ENCODE measurements at regions of chr2 and their contacts with region 1.

Region 1: DNA sequence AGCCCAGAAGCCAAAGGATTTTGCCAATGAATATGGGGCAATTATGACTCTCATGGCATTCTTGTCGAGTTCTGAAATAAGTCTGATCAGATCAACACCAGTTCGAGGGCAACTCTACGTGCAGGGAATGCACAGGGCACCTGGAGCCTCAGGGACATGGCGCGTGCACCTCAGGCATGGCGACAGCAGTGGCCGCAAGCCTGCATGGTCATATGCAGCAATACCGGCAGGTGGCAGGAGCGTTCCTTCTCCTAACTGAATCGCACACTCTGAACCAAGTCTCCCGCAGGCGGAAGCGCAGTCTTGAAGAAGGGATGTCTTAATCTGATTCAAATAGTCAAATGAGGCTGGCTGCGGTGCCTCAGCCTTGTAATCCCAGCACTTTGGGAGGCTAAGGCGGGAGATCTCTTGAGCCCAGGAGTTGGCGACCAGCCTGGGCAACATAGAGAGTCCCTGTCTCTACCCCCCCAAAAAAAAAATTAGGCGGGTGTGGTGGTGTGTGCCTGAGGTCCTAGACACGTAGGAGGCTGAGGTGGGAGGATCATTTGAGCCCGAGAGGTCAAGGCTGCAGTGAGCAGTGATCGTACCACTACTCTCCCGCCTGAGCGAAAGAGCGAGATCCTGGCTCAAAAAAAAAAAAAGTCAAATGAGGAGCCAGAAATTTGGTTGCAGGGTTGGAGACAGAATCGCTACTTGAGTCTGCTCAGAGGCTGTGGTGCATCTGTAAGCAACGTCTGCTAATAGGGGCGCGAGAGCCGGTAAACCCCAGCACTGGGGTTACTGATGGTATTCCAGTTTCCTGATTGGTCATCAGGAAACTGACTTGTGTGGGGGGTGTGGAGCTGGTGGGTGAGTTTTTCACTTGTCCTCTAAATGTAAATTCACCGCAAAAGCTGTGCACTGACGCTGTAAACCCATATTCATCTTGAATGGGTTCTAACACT is 28.8 kb downstream of the FHL2 start:
- DNase-seq: peak; percentile 76 to 93 (median 88)
- H3K4me3 ChIP-seq: peak overlapping the region in 22 of 59 donors; percentile 5 to 54 (median 28)
- H3K27ac ChIP-seq: peak overlapping the region in 47 of 59 donors; percentile 1 to 78 (median 54)
- H3K27me3 ChIP-seq: no peaks in the 10 kb centered on the region
- CTCF ChIP-seq: peak; percentile 75 to 98 (median 92)

Region 2: GRCh38 chr2:105521205-105521604 is 151.2 kb after region 1 on chr2:
- intact Hi-C with region 1: loop called (anchors 2 kb)
- DNase-seq: no peak
- H3K4me3 ChIP-seq: no peak overlapping the region
- H3K27ac ChIP-seq: no peak overlapping the region
- H3K27me3 ChIP-seq: no peaks in the 10 kb centered on the region
- CTCF ChIP-seq: peak; percentile 36 to 88 (median 70)

Measured in dorsolateral prefrontal cortex (tissue), 120 donors.